Activated B cell treated with CpG ODN at 0.5 μM for 24 hours (primary cell): ENCODE measurements at regions of chr1 and their contacts with region 1.

Region 1: GRCh38 chr1:9428601-9429341 is 110.5 kb upstream of the SLC25A33 start:
- DNase-seq: peak; percentile 100
- ATAC-seq: peak; percentile 78
- H3K4me3 Mint-ChIP-seq: peak overlapping the region; percentile 95
- H3K27ac Mint-ChIP-seq: peak overlapping the region; percentile 97
- H3K4me1 Mint-ChIP-seq: peaks cover 59% of the 10 kb centered on the region
- H3K27me3 Mint-ChIP-seq: no peaks in the 10 kb centered on the region
- CTCF ChIP-seq: no peak

Region 2: GRCh38 chr1:8423650-8424538 is 1004.9 kb before region 1 on chr1:
- CTCF ChIA-PET with region 1: no interaction called
- POLR2A ChIA-PET with region 1: no interaction called
- intact Hi-C with region 1: loop called (anchors 5 kb)
- DNase-seq: peak; percentile 59
- ATAC-seq: peak; percentile 30
- H3K4me3 Mint-ChIP-seq: peak overlapping the region; percentile 90
- H3K27ac Mint-ChIP-seq: peak overlapping the region; percentile 96
- H3K4me1 Mint-ChIP-seq: peaks cover 48% of the 10 kb centered on the region
- H3K27me3 Mint-ChIP-seq: no peaks in the 10 kb centered on the region
- CTCF ChIP-seq: no peak

Region 3: DNA sequence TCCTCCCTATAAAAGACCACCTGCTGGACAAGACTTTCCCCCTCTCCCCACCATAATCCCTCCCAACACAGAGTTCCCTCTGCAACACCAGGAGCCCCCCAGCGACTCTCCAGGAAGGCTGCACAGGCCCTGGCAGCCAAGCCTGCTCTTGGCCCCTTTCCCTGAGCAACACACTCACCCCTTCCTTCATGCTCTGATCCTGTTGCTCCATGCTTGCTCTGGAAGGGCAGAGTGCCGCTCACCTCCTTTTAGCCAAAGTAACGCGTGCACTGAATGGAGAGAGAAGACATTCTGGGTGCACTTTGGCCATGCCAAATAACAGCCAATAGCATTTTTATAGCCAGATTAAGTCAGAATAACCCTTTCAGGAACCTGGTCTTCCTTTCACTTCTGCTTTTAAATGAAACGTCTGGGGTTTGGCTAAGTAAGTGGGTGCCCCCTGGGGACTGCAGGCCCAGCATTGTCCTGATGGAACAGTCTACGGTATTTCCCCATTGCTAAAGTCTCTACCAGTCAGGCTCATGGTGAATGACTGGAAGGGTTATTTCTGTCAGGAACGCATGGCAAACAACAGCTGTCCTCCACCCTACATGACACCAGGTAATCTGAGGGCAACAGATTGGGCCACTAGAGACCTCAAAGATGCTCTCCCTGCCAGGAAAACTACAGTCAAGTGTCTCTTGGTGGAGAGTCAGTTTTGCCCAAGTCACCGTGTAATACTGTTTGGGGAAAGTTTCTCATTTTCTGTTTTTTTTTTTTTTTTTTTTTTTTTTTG is 359.3 kb before region 1 on chr1 and contains the start of gene SLC2A5:
- CTCF ChIA-PET with region 1: no interaction called
- POLR2A ChIA-PET with region 1: no interaction called
- intact Hi-C with region 1: loop called (anchors 5 kb)
- DNase-seq: peak; percentile 65
- ATAC-seq: peak; percentile 98
- H3K4me3 Mint-ChIP-seq: peak within 1 kb of the TSS; percentile 83
- H3K27ac Mint-ChIP-seq: peak within 1 kb of the TSS; percentile 64
- H3K4me1 Mint-ChIP-seq: peaks cover 71% of the 10 kb centered on the region
- H3K27me3 Mint-ChIP-seq: no peaks in the 10 kb centered on the region
- CTCF ChIP-seq: no peak
- total RNA-seq, gene SLC2A5: 3.6 and 4.5 TPM in 2 replicates

Region 4: GRCh38 chr1:9292361-9293240 is 136.2 kb before region 1 on chr1 and contains the start of gene SPSB1:
- CTCF ChIA-PET with region 1: interaction called, 18 read pairs
- POLR2A ChIA-PET with region 1: interaction called, 16 read pairs
- intact Hi-C with region 1: loop called (anchors 1 kb)
- DNase-seq: peak; percentile 52
- ATAC-seq: peak; percentile 66
- H3K4me3 Mint-ChIP-seq: peak within 1 kb of the TSS; percentile 67
- H3K27ac Mint-ChIP-seq: no peak within 1 kb of the TSS
- H3K4me1 Mint-ChIP-seq: peaks cover 6% of the 10 kb centered on the region
- H3K27me3 Mint-ChIP-seq: no peaks in the 10 kb centered on the region
- CTCF ChIP-seq: no peak
- total RNA-seq, gene SPSB1: 5.8 and 6.1 TPM in 2 replicates

Region 5: DNA sequence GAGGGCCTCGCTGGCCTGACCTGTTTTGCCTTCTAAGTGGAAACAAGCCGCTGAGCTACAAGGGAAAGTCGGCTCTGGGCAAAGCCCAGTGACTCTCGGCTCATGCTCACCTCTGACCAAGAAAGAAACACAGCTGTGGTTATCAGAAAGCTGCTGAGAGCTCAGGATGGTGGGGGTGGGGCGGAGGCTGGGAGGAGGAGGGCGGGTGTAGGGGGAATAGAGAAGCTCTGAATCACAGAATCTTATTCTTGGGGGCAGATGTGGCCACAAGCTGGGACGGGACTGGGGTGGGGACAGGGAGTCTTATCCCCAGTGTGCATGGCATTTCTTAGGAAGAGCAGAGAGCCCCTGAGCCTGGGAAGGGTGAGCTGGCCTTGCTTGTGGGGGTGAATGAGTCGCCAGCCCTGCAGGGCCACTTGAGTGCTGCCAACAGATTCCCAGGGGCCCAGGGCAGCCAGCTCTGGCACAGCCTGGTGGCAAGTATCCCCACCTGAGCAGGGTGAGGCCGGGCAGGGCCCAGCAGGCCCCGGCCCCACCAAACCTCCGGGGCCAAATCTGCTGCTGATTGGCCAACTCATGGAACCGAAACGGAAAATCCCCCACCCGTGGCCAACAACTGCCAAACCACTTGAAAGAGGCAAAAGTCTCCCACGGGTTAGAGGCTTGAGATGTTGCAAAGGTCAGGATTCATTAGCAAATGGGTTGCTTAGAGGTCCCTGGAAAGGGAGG is 15.5 kb before region 1 on chr1:
- CTCF ChIA-PET with region 1: interaction called, 22 read pairs
- POLR2A ChIA-PET with region 1: interaction called, 191 read pairs
- intact Hi-C with region 1: loop called (anchors 1 kb)
- DNase-seq: peak; percentile 54
- ATAC-seq: peak; percentile 76
- H3K4me3 Mint-ChIP-seq: peak overlapping the region; percentile 57
- H3K27ac Mint-ChIP-seq: peak overlapping the region; percentile 84
- H3K4me1 Mint-ChIP-seq: peaks cover 57% of the 10 kb centered on the region
- H3K27me3 Mint-ChIP-seq: no peaks in the 10 kb centered on the region
- CTCF ChIP-seq: no peak

Region 6: GRCh38 chr1:9486466-9487140 is 57.8 kb after region 1 on chr1:
- CTCF ChIA-PET with region 1: no interaction called
- POLR2A ChIA-PET with region 1: no interaction called
- intact Hi-C with region 1: no loop called
- DNase-seq: no peak
- ATAC-seq: no peak
- H3K4me3 Mint-ChIP-seq: no peak overlapping the region
- H3K27ac Mint-ChIP-seq: no peak overlapping the region
- H3K4me1 Mint-ChIP-seq: peaks cover 4% of the 10 kb centered on the region
- H3K27me3 Mint-ChIP-seq: peaks cover 17% of the 10 kb centered on the region
- CTCF ChIP-seq: no peak

Region 7: DNA sequence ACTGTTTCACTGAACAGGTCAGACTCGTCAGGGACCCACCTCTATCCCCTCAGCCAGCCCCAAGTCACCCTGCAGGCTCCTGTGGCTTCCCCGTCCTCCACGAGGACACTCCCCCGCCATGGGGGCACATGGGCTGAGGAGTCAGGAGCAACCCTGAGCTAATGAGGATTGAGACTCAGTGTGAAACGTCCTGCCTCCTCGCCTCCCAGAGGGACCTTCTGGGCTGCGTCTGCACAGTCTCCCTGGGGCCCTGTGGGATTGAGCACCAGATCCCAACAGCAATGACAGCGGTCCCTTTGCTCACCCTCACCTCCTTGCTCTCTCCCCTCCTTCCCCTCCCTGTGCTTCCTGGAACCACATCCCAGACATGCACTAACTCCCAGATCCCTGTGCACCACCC is 91.6 kb after region 1 on chr1:
- CTCF ChIA-PET with region 1: no interaction called
- POLR2A ChIA-PET with region 1: no interaction called
- intact Hi-C with region 1: no loop called
- DNase-seq: no peak
- ATAC-seq: no peak
- H3K4me3 Mint-ChIP-seq: no peak overlapping the region
- H3K27ac Mint-ChIP-seq: no peak overlapping the region
- H3K4me1 Mint-ChIP-seq: no peaks in the 10 kb centered on the region
- H3K27me3 Mint-ChIP-seq: peaks cover 2% of the 10 kb centered on the region
- CTCF ChIP-seq: no peak

Region 8: GRCh38 chr1:9651565-9652378 is 223.0 kb after region 1 on chr1 and contains the start of gene PIK3CD:
- CTCF ChIA-PET with region 1: no interaction called
- POLR2A ChIA-PET with region 1: interaction called, 3 read pairs
- intact Hi-C with region 1: loop called (anchors 10 kb)
- DNase-seq: peak; percentile 50
- ATAC-seq: peak; percentile 11
- H3K4me3 Mint-ChIP-seq: peak within 1 kb of the TSS; percentile 96
- H3K27ac Mint-ChIP-seq: peak within 1 kb of the TSS; percentile 99
- H3K4me1 Mint-ChIP-seq: peaks cover 52% of the 10 kb centered on the region
- H3K27me3 Mint-ChIP-seq: no peaks in the 10 kb centered on the region
- CTCF ChIP-seq: no peak
- total RNA-seq, gene PIK3CD: 238 and 265 TPM in 2 replicates

Region 9: DNA sequence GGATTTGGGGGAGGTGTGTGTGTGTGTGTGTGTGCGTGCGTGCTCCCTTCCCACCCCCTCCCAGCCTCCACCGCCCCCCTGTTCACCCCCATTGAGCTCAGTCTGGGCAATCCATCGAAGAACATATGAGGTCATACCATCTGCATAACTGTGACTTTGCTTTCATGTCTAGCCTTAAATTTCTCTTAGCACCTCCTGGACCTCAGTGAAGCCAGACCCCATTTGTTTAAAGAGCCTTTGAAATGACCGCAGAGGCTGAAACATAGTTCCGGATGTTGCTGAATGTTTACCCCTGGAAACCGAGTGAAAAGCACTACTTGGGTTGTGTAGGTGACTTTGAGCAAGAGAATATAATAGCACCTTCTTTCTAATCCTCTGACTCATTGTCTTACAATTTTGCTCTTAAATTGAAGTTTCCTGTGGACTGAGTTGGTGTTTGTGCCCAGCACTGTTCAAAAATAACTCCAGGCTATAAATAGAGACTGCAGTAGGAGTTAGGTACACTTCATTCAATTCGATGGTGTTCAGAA is 679.4 kb after region 1 on chr1:
- CTCF ChIA-PET with region 1: no interaction called
- POLR2A ChIA-PET with region 1: no interaction called
- intact Hi-C with region 1: no loop called
- DNase-seq: no peak
- ATAC-seq: no peak
- H3K4me3 Mint-ChIP-seq: no peak overlapping the region
- H3K27ac Mint-ChIP-seq: no peak overlapping the region
- H3K4me1 Mint-ChIP-seq: no peaks in the 10 kb centered on the region
- H3K27me3 Mint-ChIP-seq: no peaks in the 10 kb centered on the region
- CTCF ChIP-seq: no peak